T-cell (primary cell): ENCODE measurements at regions of chr2 and their contacts with region 1.

Region 1: GRCh38 chr2:52034706-52035105 is 1002.8 kb upstream of the NRXN1 start:
- DNase-seq: no peak
- ATAC-seq: no peak
- H3K4me3 ChIP-seq: no peak overlapping the region
- H3K4me3 Mint-ChIP-seq: no peak overlapping the region
- H3K27ac ChIP-seq: no peak overlapping the region
- H3K27ac Mint-ChIP-seq: no peak overlapping the region
- H3K4me1 ChIP-seq: no peaks in the 10 kb centered on the region
- H3K4me1 Mint-ChIP-seq: no peaks in the 10 kb centered on the region
- H3K27me3 ChIP-seq: no peaks in the 10 kb centered on the region
- H3K27me3 Mint-ChIP-seq: no peaks in the 10 kb centered on the region

Region 2: DNA sequence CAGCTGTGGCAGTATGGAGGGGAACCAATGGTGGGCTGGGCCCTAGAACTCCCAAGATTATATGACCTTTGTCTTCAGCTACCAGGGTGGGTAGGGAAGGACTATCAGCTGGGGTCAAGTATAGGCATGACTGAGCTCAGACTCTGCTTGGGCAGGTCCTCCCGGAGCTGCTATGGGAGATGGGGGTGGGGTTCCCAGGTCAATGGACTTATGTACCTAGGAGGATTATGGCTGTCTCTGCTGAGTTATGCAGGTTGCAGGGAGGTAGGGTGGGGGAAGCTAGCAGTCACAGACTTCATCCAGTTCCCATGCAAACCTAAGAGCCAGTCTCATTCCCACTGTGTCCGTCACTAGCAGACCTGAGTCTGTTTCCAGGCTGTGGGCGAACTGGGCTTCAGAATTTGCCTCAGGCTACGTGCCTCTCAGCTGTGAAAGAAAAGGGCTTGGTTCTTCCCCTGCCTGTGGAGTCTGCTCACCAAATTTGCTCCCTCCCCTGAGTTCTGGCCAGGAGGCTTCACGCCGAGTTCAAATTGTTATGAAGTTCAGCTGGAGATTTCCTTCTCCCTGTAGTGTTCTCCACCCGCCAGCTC is 17.0 kb before region 1 on chr2:
- CTCF ChIA-PET with region 1: no interaction called
- POLR2A ChIA-PET with region 1: no interaction called
- DNase-seq: no peak
- ATAC-seq: no peak
- H3K4me3 ChIP-seq: no peak overlapping the region
- H3K4me3 Mint-ChIP-seq: no peak overlapping the region
- H3K27ac ChIP-seq: no peak overlapping the region
- H3K27ac Mint-ChIP-seq: no peak overlapping the region
- H3K4me1 ChIP-seq: no peaks in the 10 kb centered on the region
- H3K4me1 Mint-ChIP-seq: no peaks in the 10 kb centered on the region
- H3K27me3 ChIP-seq: no peaks in the 10 kb centered on the region
- H3K27me3 Mint-ChIP-seq: no peaks in the 10 kb centered on the region

Region 3: GRCh38 chr2:53646788-53647187 is 1612.1 kb after region 1 on chr2:
- CTCF ChIA-PET with region 1: no interaction called
- POLR2A ChIA-PET with region 1: interaction called in 1 of 2 experiments, 16 read pairs
- DNase-seq: no peak
- ATAC-seq: no peak
- H3K4me3 ChIP-seq: no peak overlapping the region
- H3K4me3 Mint-ChIP-seq: no peak overlapping the region
- H3K27ac ChIP-seq: no peak overlapping the region
- H3K27ac Mint-ChIP-seq: no peak overlapping the region
- H3K4me1 ChIP-seq: no peaks in the 10 kb centered on the region
- H3K4me1 Mint-ChIP-seq: no peaks in the 10 kb centered on the region
- H3K27me3 ChIP-seq: no peaks in the 10 kb centered on the region
- H3K27me3 Mint-ChIP-seq: peaks cover 0 to under 1% of the 10 kb centered on the region in 2 donors